ENCODE measurements at regions of chr14 and their contacts with region 1.

Region 1: GRCh38 chr14:105203057-105203531 is 22.0 kb upstream of the NUDT14 start:
- DNase-seq: no peak
- ATAC-seq: peak; percentile 55
- H3K4me3 ChIP-seq: no peak overlapping the region
- H3K27ac ChIP-seq: no peak overlapping the region
- H3K4me1 ChIP-seq: peaks cover 32% of the 10 kb centered on the region
- H3K27me3 ChIP-seq: peaks cover 5 to 42% of the 10 kb centered on the region in 2 experiments; a peak in 3 of 5 replicates
- CTCF ChIP-seq: peak; percentile 84
- EP300 ChIP-seq: no peak
- POLR2A ChIP-seq: no peak
- RAD21 ChIP-seq: peak; percentile 63; the same call in 1 of the 2 replicates

Region 2: GRCh38 chr14:105180592-105181548 is 22.2 kb before region 1 on chr14 and contains the start of gene NUDT14:
- CTCF ChIA-PET with region 1: no interaction called
- POLR2A ChIA-PET with region 1: no interaction called
- in situ Hi-C with region 1: no loop called
- intact Hi-C with region 1: no loop called
- DNase-seq: no peak
- ATAC-seq: no peak
- H3K4me3 ChIP-seq: peak within 1 kb of the TSS; percentile 40 to 61 (median 57); a peak in 4 of 6 replicates
- H3K27ac ChIP-seq: no peak within 1 kb of the TSS
- H3K4me1 ChIP-seq: peaks cover 19% of the 10 kb centered on the region; the same call in 1 of the 2 replicates
- H3K27me3 ChIP-seq: peaks cover 14 to 78% of the 10 kb centered on the region in 2 experiments
- CTCF ChIP-seq: no peak
- EP300 ChIP-seq: no peak
- POLR2A ChIP-seq: no peak
- RAD21 ChIP-seq: no peak
- total RNA-seq, gene NUDT14: 4.0 and 5.8 TPM in 2 replicates

Region 3: GRCh38 chr14:105281371-105282097 is 78.4 kb after region 1 on chr14:
- CTCF ChIA-PET with region 1: no interaction called
- POLR2A ChIA-PET with region 1: no interaction called
- in situ Hi-C with region 1: loop called (anchors 5 kb)
- intact Hi-C with region 1: no loop called
- DNase-seq: peak; percentile 46
- ATAC-seq: peak; percentile 34; the same call in 2 of the 3 replicates
- H3K4me3 ChIP-seq: no peak overlapping the region
- H3K27ac ChIP-seq: no peak overlapping the region
- H3K4me1 ChIP-seq: peaks cover 6% of the 10 kb centered on the region; the same call in 1 of the 2 replicates
- H3K27me3 ChIP-seq: no peaks in the 10 kb centered on the region
- CTCF ChIP-seq: peak; percentile 51
- EP300 ChIP-seq: no peak
- POLR2A ChIP-seq: no peak
- RAD21 ChIP-seq: no peak

Region 4: DNA sequence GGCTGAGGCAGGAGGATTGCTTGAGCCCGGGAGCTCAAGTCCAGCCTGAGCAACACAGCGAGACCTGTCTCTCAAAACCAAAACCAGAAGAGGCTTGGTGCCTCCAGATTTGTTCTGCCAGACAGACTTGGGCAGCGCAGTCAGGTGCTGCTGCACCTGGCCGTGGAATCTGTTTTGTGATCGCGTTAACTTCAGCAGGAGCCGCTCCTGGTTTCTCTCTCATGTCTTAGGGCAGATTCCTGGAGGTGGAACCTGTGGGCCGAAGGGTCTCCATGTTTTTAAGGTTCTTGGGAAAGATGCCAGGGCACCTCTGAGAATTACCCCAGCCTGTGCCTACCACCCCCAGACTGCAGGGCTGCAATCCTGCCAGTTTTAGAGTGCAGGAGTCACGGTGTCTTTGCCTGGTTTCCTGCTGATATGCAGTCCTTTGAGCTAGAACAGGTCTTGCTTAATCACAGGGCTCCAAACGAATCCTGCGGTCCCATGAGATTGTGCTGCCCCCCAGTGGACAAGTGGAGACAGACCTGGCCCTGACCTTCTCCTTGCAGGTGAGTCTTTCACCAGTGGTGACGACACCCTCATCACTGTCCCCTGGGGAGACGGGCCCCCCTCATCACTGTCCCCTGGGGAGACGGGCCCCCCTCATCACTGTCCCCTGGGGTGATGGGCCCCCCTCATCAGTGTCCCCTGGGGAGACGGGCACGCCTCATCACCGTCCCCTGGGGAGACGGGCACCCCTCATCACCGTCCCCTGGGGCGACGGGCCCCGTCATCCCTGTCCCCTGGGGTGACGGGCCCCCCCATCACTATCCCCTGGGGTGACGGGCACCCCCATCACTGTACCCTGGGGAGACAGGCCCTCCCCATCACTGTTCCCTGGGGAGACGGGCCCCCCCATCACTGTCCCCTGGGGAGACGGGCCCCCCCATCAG is 149.1 kb after region 1 on chr14:
- CTCF ChIA-PET with region 1: interaction called, 12 read pairs
- POLR2A ChIA-PET with region 1: no interaction called
- in situ Hi-C with region 1: no loop called
- intact Hi-C with region 1: no loop called
- DNase-seq: peak; percentile 85
- ATAC-seq: peak; percentile 90
- H3K4me3 ChIP-seq: no peak overlapping the region
- H3K27ac ChIP-seq: peak overlapping the region; percentile 28
- H3K4me1 ChIP-seq: peaks cover 5% of the 10 kb centered on the region
- H3K27me3 ChIP-seq: no peaks in the 10 kb centered on the region
- CTCF ChIP-seq: peak; percentile 98
- EP300 ChIP-seq: no peak
- POLR2A ChIP-seq: no peak
- RAD21 ChIP-seq: peak; percentile 90